Right cardiac atrium (tissue), 5 donors: ENCODE measurements at regions of chr15 and their contacts with region 1.

Region 1: GRCh38 chr15:69058830-69059556 is 44.5 kb downstream of the NOX5 start:
- DNase-seq: peak; percentile 90 to 96 (median 93)
- ATAC-seq: peak; percentile 82 to 87
- H3K4me3 ChIP-seq: no peak overlapping the region
- H3K27ac ChIP-seq: peak overlapping the region; percentile 50
- H3K4me1 ChIP-seq: no peaks in the 10 kb centered on the region
- H3K27me3 ChIP-seq: no peaks in the 10 kb centered on the region

Region 2: DNA sequence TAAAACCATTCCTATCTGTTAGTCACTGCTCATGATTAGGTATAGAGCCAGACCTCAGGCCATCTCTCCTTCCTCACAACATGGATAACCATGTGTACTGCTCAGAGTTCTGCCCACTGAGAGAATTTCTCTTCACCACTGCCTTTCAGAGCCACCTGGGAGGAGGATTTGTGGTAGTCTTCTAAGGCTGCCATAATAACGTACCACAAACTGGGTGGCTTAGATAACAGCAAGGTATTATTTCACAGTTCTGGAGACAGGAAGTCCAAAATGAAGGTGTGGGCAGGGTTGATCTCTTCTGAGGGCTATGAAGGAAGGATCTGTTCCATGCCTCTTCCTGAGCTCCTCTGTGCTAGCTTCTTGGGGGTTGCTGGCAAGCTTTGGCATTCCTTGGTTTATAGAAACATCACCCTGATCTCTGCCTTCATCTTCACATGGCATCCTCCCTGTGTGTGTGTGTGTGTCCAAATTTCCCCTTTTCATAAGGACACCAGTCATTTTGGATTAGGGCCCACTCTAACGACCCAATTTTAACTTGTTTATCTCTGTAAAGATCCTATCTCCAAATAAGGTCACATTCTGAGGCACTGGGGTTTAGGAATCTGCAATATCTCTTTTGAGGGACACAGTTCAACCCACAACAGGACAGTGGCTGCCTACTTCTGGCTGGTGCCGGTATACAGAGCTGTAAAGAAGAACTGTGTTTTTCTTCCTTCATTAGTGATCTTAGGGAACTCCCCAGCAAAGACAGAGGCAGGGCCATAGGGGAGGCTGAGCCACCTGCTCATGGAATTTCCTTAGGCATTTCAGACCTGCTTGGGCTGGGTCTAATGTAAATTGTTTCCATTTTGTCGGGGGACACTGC is 86.6 kb before region 1 on chr15:
- intact Hi-C with region 1: no loop called
- DNase-seq: no peak
- ATAC-seq: no peak
- H3K4me3 ChIP-seq: no peak overlapping the region
- H3K27ac ChIP-seq: no peak overlapping the region
- H3K4me1 ChIP-seq: no peaks in the 10 kb centered on the region
- H3K27me3 ChIP-seq: no peaks in the 10 kb centered on the region

Region 3: DNA sequence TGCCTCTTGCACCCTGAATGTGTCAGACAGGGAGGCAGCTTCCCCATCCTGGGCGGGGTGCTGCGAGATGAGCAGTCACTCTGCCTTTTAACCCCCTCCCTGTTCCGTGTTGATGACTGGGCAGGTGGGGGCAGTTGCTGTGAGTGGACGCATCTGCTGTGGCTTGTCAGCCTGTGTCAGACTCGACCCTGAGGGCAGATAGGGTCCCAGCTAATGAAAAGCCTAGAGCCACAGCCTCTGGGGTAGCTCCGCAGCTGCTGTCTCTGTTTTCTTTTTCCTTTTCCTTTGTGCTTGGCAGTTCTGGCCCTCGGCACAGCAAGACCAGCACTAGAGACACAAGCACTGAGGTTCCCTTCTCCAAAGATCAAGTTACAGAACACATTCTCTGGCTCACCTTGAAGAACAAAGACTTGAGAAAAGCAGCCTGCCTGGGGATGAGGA is 58.5 kb after region 1 on chr15:
- intact Hi-C with region 1: no loop called
- DNase-seq: no peak
- ATAC-seq: no peak
- H3K4me3 ChIP-seq: no peak overlapping the region
- H3K27ac ChIP-seq: no peak overlapping the region
- H3K4me1 ChIP-seq: no peaks in the 10 kb centered on the region
- H3K27me3 ChIP-seq: no peaks in the 10 kb centered on the region

Region 4: DNA sequence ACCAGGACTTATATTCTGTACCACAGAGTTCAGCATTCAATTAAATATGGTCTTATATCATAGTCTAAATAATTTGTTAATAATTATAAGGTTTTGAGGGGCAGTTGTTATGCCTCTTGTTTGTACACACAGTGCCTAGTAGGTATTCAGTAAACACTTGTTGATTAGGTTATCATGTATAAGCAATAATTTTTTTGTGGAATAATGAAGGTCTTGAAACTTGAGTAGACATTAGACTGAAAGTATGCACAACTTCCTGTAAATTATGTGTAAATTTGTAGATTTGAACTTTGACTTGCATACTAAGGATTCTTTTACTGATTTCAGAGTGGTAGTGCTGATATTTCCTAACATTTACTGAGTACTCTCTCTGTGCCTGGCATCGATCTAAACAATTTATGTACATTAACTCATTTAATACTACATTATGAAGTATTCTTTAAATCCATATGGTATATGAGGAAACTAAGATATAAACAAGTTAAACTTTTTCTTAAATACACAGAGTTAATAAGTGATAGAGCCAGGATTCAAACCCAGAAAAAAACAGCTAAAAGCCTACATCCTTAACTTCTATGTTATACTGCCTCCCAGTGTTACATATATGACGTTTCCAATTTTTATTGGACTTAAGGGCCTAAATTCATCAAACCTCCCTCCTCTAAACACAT is 166.5 kb after region 1 on chr15:
- intact Hi-C with region 1: loop called in 3 of 4 experiments (anchors 2 to 5 kb)
- DNase-seq: no peak
- ATAC-seq: peak in 1 of 2 donors; percentile 37
- H3K4me3 ChIP-seq: no peak overlapping the region
- H3K27ac ChIP-seq: no peak overlapping the region
- H3K4me1 ChIP-seq: no peaks in the 10 kb centered on the region
- H3K27me3 ChIP-seq: no peaks in the 10 kb centered on the region

Region 5: DNA sequence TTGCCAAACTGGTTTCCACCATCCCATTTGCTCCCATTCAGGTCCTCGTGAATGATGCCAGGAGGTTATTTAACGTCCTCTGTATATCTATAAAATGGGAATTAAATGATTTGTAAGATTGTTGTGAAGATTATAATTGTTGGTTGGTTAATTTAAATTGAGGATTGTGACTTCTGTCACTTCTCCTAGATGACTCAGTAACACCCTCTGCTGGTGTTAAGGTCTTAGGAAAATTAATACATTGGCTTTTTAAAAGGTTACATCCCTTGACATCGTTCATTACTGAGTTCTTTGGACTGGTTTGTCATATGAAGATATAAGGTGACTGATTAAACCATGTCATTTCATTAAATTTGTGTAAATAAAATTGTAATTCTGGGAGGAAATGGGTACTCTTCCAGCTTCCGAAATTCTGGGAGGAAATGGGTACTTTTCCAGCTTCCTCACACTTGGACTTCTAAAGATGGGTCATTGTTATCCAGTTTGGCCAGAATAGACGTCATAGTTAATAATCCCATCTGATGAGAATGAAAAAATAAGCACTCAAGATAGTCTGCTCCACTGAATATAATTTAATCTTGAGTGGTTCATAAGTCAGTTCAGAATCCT is 206.5 kb after region 1 on chr15:
- intact Hi-C with region 1: loop called (anchors 2 to 10 kb)
- DNase-seq: no peak
- ATAC-seq: no peak
- H3K4me3 ChIP-seq: no peak overlapping the region
- H3K27ac ChIP-seq: no peak overlapping the region
- H3K4me1 ChIP-seq: no peaks in the 10 kb centered on the region
- H3K27me3 ChIP-seq: no peaks in the 10 kb centered on the region

Region 6: GRCh38 chr15:69394556-69395282 is 335.7 kb after region 1 on chr15:
- intact Hi-C with region 1: loop called (anchors 2 to 5 kb)
- DNase-seq: peak; percentile 84 to 94 (median 94)
- ATAC-seq: peak; percentile 86 to 92
- H3K4me3 ChIP-seq: no peak overlapping the region
- H3K27ac ChIP-seq: no peak overlapping the region
- H3K4me1 ChIP-seq: no peaks in the 10 kb centered on the region
- H3K27me3 ChIP-seq: no peaks in the 10 kb centered on the region